ENCODE measurements at regions of chr16 and their contacts with region 1.

Region 1: GRCh38 chr16:58009856-58010416 is 8.7 kb downstream of the USB1 start:
- DNase-seq: peak; percentile 18
- ATAC-seq: no peak
- H3K4me3 ChIP-seq: no peak overlapping the region
- H3K27ac ChIP-seq: no peak overlapping the region
- H3K4me1 ChIP-seq: no peaks in the 10 kb centered on the region
- H3K27me3 ChIP-seq: no peaks in the 10 kb centered on the region
- CTCF ChIP-seq: no peak

Region 2: DNA sequence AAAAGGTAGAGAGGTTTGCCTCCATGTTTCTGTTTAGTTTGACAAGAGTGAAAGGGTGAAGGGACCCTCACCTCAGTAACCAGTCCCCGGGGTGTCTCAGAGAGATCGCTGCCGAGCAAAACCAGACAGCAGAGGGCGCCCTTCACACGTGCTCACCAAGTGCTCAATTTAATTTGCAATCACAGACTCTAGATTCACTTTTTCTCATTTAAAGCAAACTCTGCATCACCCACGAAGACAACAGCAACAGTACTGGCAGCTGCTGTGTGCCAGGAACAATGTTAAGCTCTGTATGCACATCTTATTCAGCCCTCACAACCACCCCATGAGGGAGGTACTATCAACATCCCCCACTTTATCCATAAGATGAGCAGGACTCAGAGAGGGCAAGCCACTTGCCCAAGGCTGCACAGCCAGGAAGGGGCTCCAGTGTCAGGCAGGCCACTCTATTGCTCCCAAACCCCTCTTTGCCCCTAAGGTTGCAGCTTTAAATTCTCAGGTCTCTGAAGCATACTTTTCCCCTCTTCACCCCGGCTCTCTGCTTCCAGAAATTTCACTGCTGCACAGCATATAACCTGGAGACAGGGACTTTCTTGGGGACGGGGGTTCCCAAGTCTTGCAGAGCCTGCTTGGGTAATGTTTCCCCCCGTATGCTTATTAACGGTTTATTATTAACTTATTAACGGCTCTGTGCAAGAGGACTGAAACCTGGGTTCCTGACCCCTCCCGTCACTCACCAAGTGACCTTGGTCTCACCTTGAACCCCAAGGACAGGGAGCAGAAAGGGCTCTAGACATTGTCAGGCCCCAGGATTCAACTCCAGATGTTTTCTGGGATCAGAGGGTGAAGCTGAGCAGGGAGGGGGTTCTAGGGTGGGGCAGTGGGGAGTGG is 109.9 kb before region 1 on chr16:
- intact Hi-C with region 1: loop called (anchors 5 kb)
- DNase-seq: peak; percentile 81
- ATAC-seq: peak; percentile 75 to 81
- H3K4me3 ChIP-seq: no peak overlapping the region
- H3K27ac ChIP-seq: no peak overlapping the region
- H3K4me1 ChIP-seq: peaks cover 4% of the 10 kb centered on the region
- H3K27me3 ChIP-seq: peaks cover 17% of the 10 kb centered on the region
- CTCF ChIP-seq: peak; percentile 91

Measured in lower lobe of right lung (tissue), 2 donors.